Left ventricle myocardium inferior (tissue), 1 donor: ENCODE measurements at regions of chr22 and their contacts with region 1.

Region 1: GRCh38 chr22:41022470-41023298 is 69.7 kb upstream of the EP300 start:
- DNase-seq: peak; percentile 93
- H3K4me3 ChIP-seq: peak overlapping the region; percentile 84
- H3K27ac ChIP-seq: peak overlapping the region; percentile 99
- H3K4me1 ChIP-seq: peaks cover 26% of the 10 kb centered on the region
- H3K27me3 ChIP-seq: no peaks in the 10 kb centered on the region
- CTCF ChIP-seq: no peak

Region 2: DNA sequence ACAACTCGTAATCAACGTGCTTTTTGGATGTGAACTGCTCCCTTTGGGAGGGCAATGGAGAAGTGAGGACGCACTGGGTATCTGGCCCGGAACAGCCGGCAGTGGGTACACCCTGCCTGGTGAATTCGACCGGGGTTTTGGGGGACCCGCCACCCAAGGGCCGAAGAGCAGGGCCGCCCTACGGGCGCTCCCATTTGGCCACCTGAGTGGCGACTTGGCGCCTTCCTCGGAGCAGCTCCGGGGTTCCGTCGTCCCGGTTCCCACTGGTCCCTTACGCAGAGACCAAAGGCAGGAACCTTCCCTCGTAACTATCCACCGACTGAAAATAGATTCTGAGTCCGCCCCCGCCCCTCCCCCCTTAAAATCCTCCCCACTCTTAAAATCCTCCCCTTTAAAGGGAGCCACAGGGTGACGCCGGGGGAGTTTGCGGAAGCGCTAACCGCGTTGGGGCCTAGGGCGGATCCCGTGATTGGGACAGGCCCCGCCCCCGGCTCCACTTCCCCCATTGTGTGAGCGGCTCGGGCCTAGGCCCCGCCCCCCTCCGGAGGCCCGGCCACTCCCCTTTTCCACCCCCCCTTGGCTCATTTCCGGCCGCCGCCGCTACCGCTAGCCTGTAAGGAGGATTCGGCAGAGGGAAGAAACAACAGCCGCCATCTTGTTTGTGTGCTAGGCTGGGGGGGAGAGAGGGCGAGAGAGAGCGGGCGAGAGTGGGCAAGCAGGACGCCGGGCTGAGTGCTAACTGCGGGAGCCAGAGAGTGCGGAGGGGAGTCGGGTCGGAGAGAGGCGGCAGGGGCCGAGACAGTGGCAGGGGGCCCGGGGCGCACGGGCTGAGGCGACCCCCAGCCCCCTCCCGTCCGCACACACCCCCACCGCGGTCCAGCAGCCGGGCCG is 68.7 kb after region 1 on chr22:
- intact Hi-C with region 1: loop called (anchors 10 kb)
- DNase-seq: peak; percentile 99
- H3K4me3 ChIP-seq: peak overlapping the region; percentile 97
- H3K27ac ChIP-seq: peak overlapping the region; percentile 100
- H3K4me1 ChIP-seq: peaks cover 48% of the 10 kb centered on the region
- H3K27me3 ChIP-seq: no peaks in the 10 kb centered on the region
- CTCF ChIP-seq: no peak

Region 3: DNA sequence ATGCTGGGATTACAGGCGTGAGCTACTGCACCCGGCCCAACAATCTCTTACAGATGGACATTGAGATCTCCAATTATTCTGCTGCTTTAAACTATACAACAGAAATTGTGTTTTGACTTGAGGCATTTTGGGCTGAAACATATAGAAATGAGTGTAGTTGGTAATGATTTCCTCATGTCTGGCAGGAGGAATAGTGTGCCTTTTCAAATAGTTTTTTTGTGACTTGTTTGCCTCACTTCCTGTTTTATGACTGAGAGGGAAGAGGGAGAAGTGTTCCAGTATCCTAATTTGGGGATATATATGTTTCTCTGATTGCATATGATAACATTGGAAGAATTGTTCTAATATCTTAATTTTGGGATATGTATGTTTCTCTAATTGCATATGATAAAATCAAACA is 109.9 kb after region 1 on chr22:
- intact Hi-C with region 1: no loop called
- DNase-seq: no peak
- H3K4me3 ChIP-seq: no peak overlapping the region
- H3K27ac ChIP-seq: no peak overlapping the region
- H3K4me1 ChIP-seq: no peaks in the 10 kb centered on the region
- H3K27me3 ChIP-seq: no peaks in the 10 kb centered on the region
- CTCF ChIP-seq: no peak